ENCODE measurements at regions of chr5 and their contacts with region 1.

Region 1: GRCh38 chr5:139968547-139969261 is 74.4 kb downstream of the NRG2 start:
- DNase-seq: peak; percentile 89
- H3K4me3 Mint-ChIP-seq: no peak overlapping the region
- H3K27ac Mint-ChIP-seq: no peak overlapping the region
- H3K4me1 Mint-ChIP-seq: no peaks in the 10 kb centered on the region
- H3K27me3 Mint-ChIP-seq: no peaks in the 10 kb centered on the region
- CTCF ChIP-seq: peak; percentile 100

Region 2: DNA sequence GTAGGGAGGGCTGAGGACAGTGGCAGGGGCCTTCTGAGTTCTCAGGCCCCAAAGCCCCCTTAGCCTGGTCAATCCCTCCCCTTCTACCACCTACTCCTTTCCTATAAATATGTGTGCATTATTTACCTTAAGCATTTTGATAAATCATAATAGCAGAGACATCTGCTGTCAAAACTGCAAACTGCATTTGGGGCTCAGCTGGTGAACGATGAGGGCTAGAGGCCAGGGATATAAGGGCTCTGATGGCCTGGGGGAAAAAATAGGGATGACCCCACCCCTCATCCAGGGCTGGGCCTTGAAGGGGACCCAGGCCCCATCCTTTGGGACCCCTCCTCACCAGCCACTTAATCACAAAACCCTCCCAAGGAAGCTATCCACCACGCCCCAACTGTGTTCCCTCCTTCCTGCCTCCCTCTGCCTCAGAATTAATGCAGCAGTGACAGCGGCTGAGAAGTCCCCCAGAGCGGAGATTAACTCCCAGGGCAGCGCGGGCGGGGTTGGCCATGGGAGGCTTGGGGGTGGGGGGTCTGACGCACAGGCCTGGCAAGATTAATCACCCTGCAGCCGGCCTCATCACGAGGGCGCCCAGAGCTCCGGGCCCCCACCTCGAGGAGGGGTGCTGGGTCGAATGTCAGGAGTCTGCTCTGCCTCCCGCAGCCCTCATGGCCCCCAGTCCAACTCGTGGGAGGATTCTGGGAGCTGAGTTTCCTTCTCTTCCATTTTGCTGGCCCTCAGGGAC is 278.5 kb before region 1 on chr5:
- CTCF ChIA-PET with region 1: interaction called, 10 read pairs
- POLR2A ChIA-PET with region 1: no interaction called
- intact Hi-C with region 1: no loop called
- DNase-seq: peak; percentile 66
- H3K4me3 Mint-ChIP-seq: no peak overlapping the region
- H3K27ac Mint-ChIP-seq: no peak overlapping the region
- H3K4me1 Mint-ChIP-seq: peaks cover 6% of the 10 kb centered on the region
- H3K27me3 Mint-ChIP-seq: no peaks in the 10 kb centered on the region
- CTCF ChIP-seq: peak; percentile 84

Region 3: DNA sequence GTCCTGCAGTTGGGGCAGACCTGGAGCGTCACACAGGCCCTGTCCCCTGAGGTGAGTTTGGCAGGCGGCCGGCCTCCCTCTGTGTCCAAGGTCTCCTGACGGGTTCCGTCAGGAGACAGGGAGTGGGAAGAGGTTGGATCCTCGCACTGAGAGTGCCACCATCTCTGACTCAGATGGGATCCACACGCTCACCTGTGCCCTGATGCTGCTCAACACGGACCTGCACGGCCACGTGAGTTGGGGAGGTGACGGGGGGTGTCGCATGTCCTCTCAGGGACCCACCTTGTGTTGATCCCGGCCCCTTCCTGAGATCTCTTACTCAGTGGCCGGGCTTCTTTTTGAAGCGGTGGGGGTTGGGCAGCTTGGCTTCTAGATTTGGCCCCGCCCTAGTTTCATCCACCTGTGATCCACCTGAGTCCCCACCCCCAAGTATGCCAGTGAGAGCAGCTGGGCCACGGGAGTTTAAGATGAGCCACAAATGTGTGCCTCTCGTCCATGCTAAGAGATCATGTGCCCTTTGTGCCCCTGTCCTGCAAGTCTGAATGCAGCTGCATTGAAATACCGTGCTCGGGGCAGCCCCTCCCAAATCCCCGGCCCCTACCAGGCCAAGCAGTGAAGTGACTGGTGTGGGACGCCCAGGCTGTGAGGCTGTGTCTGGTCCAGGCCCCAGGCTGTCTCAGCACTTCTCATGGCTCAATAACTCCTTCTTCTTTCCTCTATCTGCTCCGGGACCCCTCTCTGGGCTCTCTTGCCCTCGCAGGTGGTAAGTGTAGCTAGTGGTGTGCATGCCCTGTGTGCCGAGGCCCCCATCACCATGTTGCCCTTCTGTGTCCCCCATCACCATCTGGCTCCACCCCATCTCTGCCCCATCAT is 145.9 kb before region 1 on chr5:
- CTCF ChIA-PET with region 1: interaction called, 14 read pairs
- POLR2A ChIA-PET with region 1: no interaction called
- intact Hi-C with region 1: no loop called
- DNase-seq: no peak
- H3K4me3 Mint-ChIP-seq: no peak overlapping the region
- H3K27ac Mint-ChIP-seq: no peak overlapping the region
- H3K4me1 Mint-ChIP-seq: no peaks in the 10 kb centered on the region
- H3K27me3 Mint-ChIP-seq: peaks cover 69% of the 10 kb centered on the region
- CTCF ChIP-seq: no peak

Region 4: DNA sequence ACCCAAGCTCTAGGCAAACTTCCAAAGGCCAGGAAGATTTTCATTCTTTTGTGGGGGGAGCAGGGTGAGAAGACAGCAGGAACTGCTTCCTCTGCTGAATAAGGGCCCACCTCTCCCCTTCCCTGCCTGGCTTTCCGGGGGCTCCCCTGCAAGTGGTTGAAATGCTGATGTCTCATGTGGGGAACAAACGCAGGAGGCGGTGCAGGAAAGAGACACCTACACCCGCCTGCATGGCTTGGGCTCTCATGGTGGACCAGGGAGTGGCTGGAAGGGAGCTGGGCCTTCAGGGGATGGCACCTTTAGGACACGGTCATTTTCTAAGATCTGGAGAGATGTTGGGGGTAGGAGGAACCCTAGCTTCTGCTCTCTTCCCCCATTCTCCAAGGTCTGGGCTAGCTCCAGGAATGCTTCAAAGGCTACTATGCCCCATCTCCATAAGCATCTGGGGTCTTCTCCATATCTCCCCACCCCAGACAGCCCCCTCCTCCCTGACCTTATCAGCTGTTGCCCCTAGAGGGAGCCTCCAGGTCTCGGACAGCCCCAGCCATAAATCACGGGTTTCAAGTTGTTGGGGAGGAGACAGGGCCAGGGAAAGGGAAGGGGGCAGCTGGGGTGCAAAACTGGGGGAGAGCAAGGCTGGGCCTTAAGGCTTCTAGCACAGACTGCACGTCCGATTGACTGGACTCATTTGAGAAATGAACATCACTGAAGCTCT is 96.5 kb before region 1 on chr5:
- CTCF ChIA-PET with region 1: interaction called, 286 read pairs
- POLR2A ChIA-PET with region 1: interaction called, 5 read pairs
- intact Hi-C with region 1: no loop called
- DNase-seq: no peak
- H3K4me3 Mint-ChIP-seq: no peak overlapping the region
- H3K27ac Mint-ChIP-seq: no peak overlapping the region
- H3K4me1 Mint-ChIP-seq: peaks cover 4% of the 10 kb centered on the region
- H3K27me3 Mint-ChIP-seq: peaks cover 1% of the 10 kb centered on the region
- CTCF ChIP-seq: no peak

Region 5: GRCh38 chr5:139919308-139919707 is 49.4 kb before region 1 on chr5:
- CTCF ChIA-PET with region 1: interaction called, 100 read pairs
- POLR2A ChIA-PET with region 1: no interaction called
- intact Hi-C with region 1: no loop called
- DNase-seq: no peak
- H3K4me3 Mint-ChIP-seq: no peak overlapping the region
- H3K27ac Mint-ChIP-seq: no peak overlapping the region
- H3K4me1 Mint-ChIP-seq: no peaks in the 10 kb centered on the region
- H3K27me3 Mint-ChIP-seq: peaks cover 14% of the 10 kb centered on the region
- CTCF ChIP-seq: no peak

Region 6: DNA sequence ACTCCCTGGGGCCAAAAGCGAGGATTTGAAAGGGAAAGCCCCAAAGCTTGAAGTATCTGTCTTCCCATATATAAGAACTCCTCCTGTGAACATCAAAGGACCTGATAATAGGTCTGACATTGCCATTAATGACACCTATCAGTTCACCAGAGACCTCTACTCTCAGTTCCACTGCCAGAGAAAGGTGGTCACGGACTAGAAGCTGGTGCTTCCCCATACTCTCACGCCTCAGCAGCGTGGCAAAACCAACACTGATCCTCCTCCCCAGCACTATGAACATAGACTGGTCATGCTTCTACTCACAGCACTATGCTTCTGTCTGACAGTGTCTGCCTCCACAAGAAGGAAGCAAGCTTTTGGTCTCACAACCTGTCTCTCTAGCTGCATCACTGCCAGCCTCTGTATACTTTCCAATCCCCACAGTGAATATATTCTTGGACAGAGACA is 36.5 kb after region 1 on chr5:
- CTCF ChIA-PET with region 1: interaction called, 26 read pairs
- POLR2A ChIA-PET with region 1: no interaction called
- intact Hi-C with region 1: no loop called
- DNase-seq: no peak
- H3K4me3 Mint-ChIP-seq: no peak overlapping the region
- H3K27ac Mint-ChIP-seq: no peak overlapping the region
- H3K4me1 Mint-ChIP-seq: no peaks in the 10 kb centered on the region
- H3K27me3 Mint-ChIP-seq: peaks cover 68% of the 10 kb centered on the region
- CTCF ChIP-seq: no peak

Measured in MCF 10A (cell line).